AG04450 (cell line): ENCODE measurements at regions of chr5 and their contacts with region 1.

Region 1: GRCh38 chr5:150022681-150023080 is 22.1 kb downstream of the HMGXB3 start:
- DNase-seq: no peak
- H3K4me3 ChIP-seq: no peak overlapping the region
- H3K27ac ChIP-seq: no peak overlapping the region
- H3K27me3 ChIP-seq: no peaks in the 10 kb centered on the region
- CTCF ChIP-seq: no peak

Region 2: GRCh38 chr5:149820536-149821510 is 201.9 kb before region 1 on chr5:
- CTCF ChIA-PET with region 1: no interaction called
- POLR2A ChIA-PET with region 1: no interaction called
- DNase-seq: no peak
- H3K4me3 ChIP-seq: no peak overlapping the region
- H3K27ac ChIP-seq: no peak overlapping the region
- H3K27me3 ChIP-seq: no peaks in the 10 kb centered on the region
- CTCF ChIP-seq: no peak

Region 3: DNA sequence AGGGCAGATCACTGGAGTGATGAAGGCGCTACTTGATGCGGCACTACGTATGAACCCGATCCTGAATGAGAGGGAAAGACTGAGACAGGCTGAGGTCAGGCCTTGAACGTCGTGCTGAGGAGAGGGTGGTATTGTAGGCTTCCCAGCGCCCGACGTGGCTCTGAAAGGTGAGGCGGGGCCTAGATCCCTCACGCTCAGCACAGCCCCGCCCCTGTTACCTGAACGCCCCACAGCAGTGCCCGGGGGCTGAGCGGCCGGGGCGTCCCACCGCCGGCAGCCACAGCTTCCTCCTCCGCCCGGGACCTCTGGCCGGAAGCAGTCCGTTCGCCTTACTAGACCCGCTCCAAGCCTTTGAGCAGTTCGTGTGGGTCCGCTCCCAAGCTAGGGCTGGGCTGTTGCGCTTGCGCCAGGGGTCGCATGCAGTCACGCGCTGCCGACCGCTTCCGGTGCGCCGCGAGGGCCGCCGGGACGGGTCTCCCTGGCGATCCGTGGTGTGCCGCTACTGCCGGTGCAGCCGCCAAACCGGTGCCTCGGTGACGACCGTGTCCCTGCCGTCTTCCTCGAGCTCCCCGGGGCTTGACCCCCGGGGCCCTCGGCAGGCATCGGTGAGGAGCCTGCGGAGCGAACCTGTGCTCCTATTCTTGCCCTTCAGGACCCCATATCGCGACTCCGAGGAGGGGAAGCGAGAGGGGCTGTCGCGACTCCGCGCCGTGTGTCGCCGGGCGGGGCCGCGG is 22.3 kb before region 1 on chr5 and contains the starts of genes HMGXB3 and TIGD6:
- CTCF ChIA-PET with region 1: no interaction called
- POLR2A ChIA-PET with region 1: interaction called, 10 read pairs
- DNase-seq: peak; percentile 88
- H3K4me3 ChIP-seq: peak within 1 kb of the TSS; percentile 89
- H3K27ac ChIP-seq: peak within 1 kb of the TSS; percentile 94
- H3K27me3 ChIP-seq: no peaks in the 10 kb centered on the region
- CTCF ChIP-seq: 0 out of 2 replicates have a peak, but pooled peaks have one; percentile 17
- polyA plus RNA-seq, gene HMGXB3: 35.1 and 37.0 TPM in 2 replicates
- polyA plus RNA-seq, gene TIGD6: 6.5 and 6.7 TPM in 2 replicates